Activated CD4-positive, alpha-beta memory T cell treated with anti-CD3 and anti-CD28 coated beads for 36 hours (primary cell): ENCODE measurements at regions of chr19 and their contacts with region 1.

Region 1: DNA sequence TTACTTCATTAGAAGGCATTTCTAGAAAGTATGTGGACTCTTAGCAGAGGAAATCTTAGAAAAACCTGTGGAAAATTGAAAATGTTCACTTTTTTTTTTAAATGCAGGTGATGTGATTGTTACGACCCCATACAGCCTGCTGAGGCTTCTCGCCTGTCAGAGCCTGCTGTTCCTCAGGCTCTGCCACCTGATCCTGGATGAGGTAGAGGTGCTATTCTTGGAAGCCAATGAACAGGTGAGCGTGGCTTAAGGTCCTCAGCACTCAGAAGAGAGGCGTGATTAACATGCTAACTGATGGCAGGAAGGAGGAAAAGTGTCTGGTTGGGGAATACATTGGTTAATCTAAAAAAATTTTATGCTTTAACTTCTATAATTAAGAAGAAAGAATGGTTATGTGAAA is 71.4 kb downstream of the SLC7A9 start:
- DNase-seq: no peak
- H3K4me3 Mint-ChIP-seq: no peak overlapping the region
- H3K27ac Mint-ChIP-seq: no peak overlapping the region
- H3K4me1 Mint-ChIP-seq: peaks cover 28% of the 10 kb centered on the region
- H3K27me3 Mint-ChIP-seq: no peaks in the 10 kb centered on the region

Region 2: GRCh38 chr19:32748497-32748896 is 49.7 kb before region 1 on chr19:
- CTCF ChIA-PET with region 1: no interaction called
- POLR2A ChIA-PET with region 1: no interaction called
- intact Hi-C with region 1: loop called (anchors 5 kb)
- DNase-seq: peak; percentile 10
- H3K4me3 Mint-ChIP-seq: no peak overlapping the region
- H3K27ac Mint-ChIP-seq: no peak overlapping the region
- H3K4me1 Mint-ChIP-seq: peaks cover 6% of the 10 kb centered on the region
- H3K27me3 Mint-ChIP-seq: peaks cover 16% of the 10 kb centered on the region

Region 3: GRCh38 chr19:32824906-32825608 is 26.9 kb after region 1 on chr19:
- CTCF ChIA-PET with region 1: no interaction called
- POLR2A ChIA-PET with region 1: no interaction called
- intact Hi-C with region 1: loop called (anchors 1 kb)
- DNase-seq: no peak
- H3K4me3 Mint-ChIP-seq: no peak overlapping the region
- H3K27ac Mint-ChIP-seq: no peak overlapping the region
- H3K4me1 Mint-ChIP-seq: peaks cover 11% of the 10 kb centered on the region
- H3K27me3 Mint-ChIP-seq: peaks cover 2% of the 10 kb centered on the region

Region 4: DNA sequence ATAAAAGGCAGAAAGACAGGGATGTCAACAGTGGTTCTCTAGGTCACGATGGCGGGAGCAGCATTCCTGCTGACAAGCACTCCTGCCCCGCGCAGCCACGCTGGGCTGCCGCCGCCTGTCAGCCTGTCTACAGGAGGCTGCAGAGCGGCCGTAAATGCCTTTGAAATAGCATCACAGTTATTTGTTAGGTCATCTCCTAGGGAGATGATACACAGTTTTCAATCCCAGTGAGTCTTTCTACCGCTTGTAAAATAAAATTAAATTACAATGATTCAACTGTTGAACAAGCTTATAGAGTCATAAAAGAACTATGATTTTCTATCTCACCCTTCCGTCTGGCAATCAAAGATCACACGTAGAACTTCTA is 78.7 kb after region 1 on chr19:
- CTCF ChIA-PET with region 1: no interaction called
- POLR2A ChIA-PET with region 1: no interaction called
- intact Hi-C with region 1: no loop called
- DNase-seq: no peak
- H3K4me3 Mint-ChIP-seq: no peak overlapping the region
- H3K27ac Mint-ChIP-seq: no peak overlapping the region
- H3K4me1 Mint-ChIP-seq: no peaks in the 10 kb centered on the region
- H3K27me3 Mint-ChIP-seq: no peaks in the 10 kb centered on the region